OCI-LY7 (cell line): ENCODE measurements at regions of chr2 and their contacts with region 1.

Region 1: GRCh38 chr2:60840880-60841279 is 40.5 kb upstream of the REL start:
- DNase-seq: peak; percentile 99
- H3K4me3 ChIP-seq: peak overlapping the region; percentile 64
- H3K27ac ChIP-seq: peak overlapping the region; percentile 96
- H3K4me1 ChIP-seq: peaks cover 97% of the 10 kb centered on the region
- CTCF ChIP-seq: no peak

Region 2: GRCh38 chr2:59888015-59888414 is 952.9 kb before region 1 on chr2:
- CTCF ChIA-PET with region 1: no interaction called
- POLR2A ChIA-PET with region 1: no interaction called
- intact Hi-C with region 1: no loop called
- DNase-seq: peak; percentile 85
- H3K4me3 ChIP-seq: no peak overlapping the region
- H3K27ac ChIP-seq: peak overlapping the region; percentile 51
- H3K4me1 ChIP-seq: peaks cover 25% of the 10 kb centered on the region
- CTCF ChIP-seq: peak; percentile 59

Region 3: GRCh38 chr2:60806988-60807681 is 33.7 kb before region 1 on chr2:
- CTCF ChIA-PET with region 1: interaction called, 3 read pairs
- POLR2A ChIA-PET with region 1: interaction called, 11 read pairs
- intact Hi-C with region 1: loop called (anchors 1 kb)
- DNase-seq: peak; percentile 65
- H3K4me3 ChIP-seq: peak overlapping the region; percentile 3
- H3K27ac ChIP-seq: peak overlapping the region; percentile 56
- H3K4me1 ChIP-seq: peaks cover 53% of the 10 kb centered on the region
- CTCF ChIP-seq: no peak

Region 4: GRCh38 chr2:60818272-60818671 is 22.6 kb before region 1 on chr2:
- CTCF ChIA-PET with region 1: interaction called, 10 read pairs
- POLR2A ChIA-PET with region 1: interaction called, 89 read pairs
- intact Hi-C with region 1: no loop called
- DNase-seq: peak; percentile 59
- H3K4me3 ChIP-seq: no peak overlapping the region
- H3K27ac ChIP-seq: no peak overlapping the region
- H3K4me1 ChIP-seq: peaks cover 50% of the 10 kb centered on the region
- CTCF ChIP-seq: peak; percentile 78

Region 5: GRCh38 chr2:60867848-60868247 is 27.0 kb after region 1 on chr2:
- CTCF ChIA-PET with region 1: interaction called, 3 read pairs
- POLR2A ChIA-PET with region 1: interaction called, 45 read pairs
- intact Hi-C with region 1: loop called (anchors 2 kb)
- DNase-seq: peak; percentile 81
- H3K4me3 ChIP-seq: peak overlapping the region; percentile 22
- H3K27ac ChIP-seq: peak overlapping the region; percentile 79
- H3K4me1 ChIP-seq: peaks cover 41% of the 10 kb centered on the region
- CTCF ChIP-seq: no peak

Region 6: DNA sequence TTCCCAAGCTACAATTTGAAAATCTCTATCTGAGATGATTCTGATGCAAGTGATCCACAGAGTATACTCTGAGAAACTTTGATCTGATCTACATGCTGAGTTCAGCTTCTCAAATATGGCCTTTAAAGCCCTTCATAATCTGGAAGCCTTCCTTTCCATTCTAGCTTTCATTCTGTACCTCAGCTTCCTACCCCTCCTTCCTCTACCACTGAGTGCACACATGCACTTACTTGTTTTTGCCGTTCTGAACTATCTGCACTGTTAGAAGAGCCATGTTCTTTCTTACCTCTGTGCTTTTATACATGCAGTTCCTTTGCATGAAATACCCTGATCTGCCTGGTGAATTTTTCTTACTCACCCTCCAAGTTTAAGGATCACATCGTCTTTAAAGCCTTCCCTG is 65.5 kb after region 1 on chr2:
- CTCF ChIA-PET with region 1: no interaction called
- POLR2A ChIA-PET with region 1: no interaction called
- intact Hi-C with region 1: no loop called
- DNase-seq: no peak
- H3K4me3 ChIP-seq: no peak overlapping the region
- H3K27ac ChIP-seq: no peak overlapping the region
- H3K4me1 ChIP-seq: no peaks in the 10 kb centered on the region
- CTCF ChIP-seq: no peak